Cardiac septum (tissue), 1 donor: ENCODE measurements at regions of chr12 and their contacts with region 1.

Region 1: GRCh38 chr12:11581179-11581755 is 68.2 kb upstream of the ETV6 start:
- DNase-seq: no peak

Region 2: GRCh38 chr12:11621797-11622423 is 40.6 kb after region 1 on chr12:
- intact Hi-C with region 1: loop called (anchors 5 kb)
- DNase-seq: no peak

Region 3: DNA sequence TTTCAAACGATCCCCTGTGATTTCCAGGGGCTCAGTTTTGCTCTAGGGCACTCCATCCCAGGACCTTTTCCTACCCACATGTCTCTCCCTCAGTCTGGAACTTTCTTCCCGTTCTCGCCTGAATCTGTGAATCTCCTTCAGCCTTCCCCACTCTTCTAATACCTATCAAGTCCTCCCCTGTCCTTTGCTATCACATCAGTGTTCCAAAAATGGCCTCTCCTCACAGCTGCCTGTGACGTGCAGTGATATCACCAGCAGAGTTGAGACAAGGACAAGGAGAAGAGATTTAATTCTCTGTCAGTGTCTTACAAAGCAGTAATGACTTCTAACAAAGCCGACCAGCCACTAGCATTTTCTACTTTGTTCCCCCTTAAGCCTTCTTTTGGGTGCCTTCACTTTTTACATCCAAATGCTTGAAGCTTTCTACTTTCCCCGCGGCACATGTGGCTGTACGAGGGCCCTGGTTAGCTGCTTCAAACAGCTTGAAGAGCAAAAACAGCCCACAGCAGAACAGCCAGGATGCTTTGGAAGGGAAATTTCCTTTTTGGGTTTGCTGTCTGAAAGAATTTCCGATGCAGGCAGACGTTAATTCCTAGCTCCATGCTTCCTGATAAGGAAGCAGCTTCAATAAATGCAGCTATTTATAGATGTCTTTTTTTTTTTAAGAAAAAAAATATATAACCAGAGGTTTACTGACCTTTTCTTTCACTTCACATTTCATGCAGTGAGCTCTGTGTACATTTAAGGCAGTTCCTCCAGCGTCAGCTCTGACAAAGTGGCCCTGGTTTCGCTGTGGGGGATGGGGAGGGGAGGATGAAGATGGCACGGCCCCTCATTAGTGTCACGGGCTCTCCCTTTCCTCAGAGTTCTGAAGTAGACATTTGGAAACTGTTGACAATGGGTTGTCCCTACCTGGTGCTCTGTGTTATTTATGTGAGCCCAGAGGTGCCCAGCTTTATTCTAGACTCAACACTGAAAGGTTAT is 177.5 kb after region 1 on chr12:
- intact Hi-C with region 1: no loop called
- DNase-seq: no peak

Region 4: GRCh38 chr12:11891754-11892386 is 310.6 kb after region 1 on chr12:
- intact Hi-C with region 1: loop called (anchors 5 kb)
- DNase-seq: no peak

Region 5: DNA sequence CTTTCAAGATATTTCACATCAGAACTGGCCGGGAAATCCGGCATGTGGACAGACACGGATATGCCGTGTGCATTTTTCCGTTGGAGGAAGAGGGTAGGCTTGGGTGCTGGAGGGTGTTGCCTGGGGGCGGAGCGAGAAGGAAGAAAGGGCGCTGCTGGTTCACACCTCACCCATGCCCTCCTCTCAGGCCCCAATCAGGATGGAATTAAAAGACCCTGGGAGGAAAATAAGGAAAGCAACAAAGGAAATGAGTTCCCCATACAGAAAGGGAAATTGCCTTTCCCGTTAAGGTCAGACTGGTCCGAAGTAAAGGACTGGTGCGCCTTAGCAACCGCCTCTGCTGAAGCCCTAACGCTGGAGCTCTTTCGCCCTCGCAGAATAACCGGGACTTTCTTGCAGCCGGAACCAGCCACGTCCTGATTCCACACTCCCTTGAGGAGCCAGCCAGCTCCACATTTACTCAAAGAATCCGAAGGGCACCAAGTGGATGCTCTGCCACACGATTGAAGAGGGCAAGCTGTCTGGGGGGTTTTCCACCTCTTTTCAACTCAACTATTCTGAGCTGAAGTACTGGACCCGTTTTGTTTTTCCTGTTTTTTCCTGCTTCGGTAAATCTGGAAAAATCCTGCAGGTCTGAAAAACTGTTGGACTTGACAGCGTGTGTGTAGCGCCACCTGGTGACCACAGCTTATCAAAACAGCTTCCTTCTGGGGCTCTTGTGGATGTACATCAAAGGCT is 451.8 kb after region 1 on chr12:
- intact Hi-C with region 1: loop called (anchors 1 kb)
- DNase-seq: peak; percentile 88